Heart right ventricle (tissue), 16 donors: ENCODE measurements at regions of chr9 and their contacts with region 1.

Region 1: GRCh38 chr9:21210311-21210710 is 3.4 kb upstream of the IFNA10 start:
- DNase-seq: no peak
- ATAC-seq: no peak
- H3K4me3 ChIP-seq: no peak overlapping the region
- H3K27ac ChIP-seq: no peak overlapping the region
- H3K4me1 ChIP-seq: no peaks in the 10 kb centered on the region
- H3K27me3 ChIP-seq: peaks cover 0 to 3% (median 0%) of the 10 kb centered on the region in 7 donors
- CTCF ChIP-seq: no peak

Region 2: GRCh38 chr9:21154018-21154608 is 56.2 kb before region 1 on chr9:
- intact Hi-C with region 1: loop called in 1 of 10 experiments (anchors 10 kb)
- DNase-seq: no peak
- ATAC-seq: peak in 2 of 8 donors; percentile 46 to 50
- H3K4me3 ChIP-seq: no peak overlapping the region
- H3K27ac ChIP-seq: peak overlapping the region in 1 of 10 donors; percentile 32
- H3K4me1 ChIP-seq: peaks cover 0 to 16% (median 0%) of the 10 kb centered on the region in 9 donors
- H3K27me3 ChIP-seq: no peaks in the 10 kb centered on the region
- CTCF ChIP-seq: peak in 5 of 9 donors; percentile 21 to 37 (median 35)

Region 3: DNA sequence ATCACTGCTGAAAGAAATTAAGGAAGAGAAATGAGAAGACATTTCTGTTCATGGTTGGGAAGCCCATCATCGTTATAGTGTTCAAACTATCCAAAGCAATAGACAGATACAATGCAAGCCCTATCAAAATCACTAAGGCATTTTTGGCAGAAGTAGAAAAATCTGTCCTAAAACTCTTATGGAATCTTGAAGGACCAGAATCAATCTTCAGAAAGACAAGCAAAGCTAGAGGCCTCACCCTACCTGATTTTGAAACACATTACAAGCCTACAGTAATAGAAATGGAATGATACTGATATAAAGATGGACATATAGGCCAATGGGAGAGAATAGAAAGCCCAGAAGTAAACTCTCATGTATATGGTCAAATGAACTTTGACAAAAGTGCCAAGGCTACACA is 39.0 kb before region 1 on chr9:
- intact Hi-C with region 1: no loop called
- DNase-seq: no peak
- ATAC-seq: no peak
- H3K4me3 ChIP-seq: no peak overlapping the region
- H3K27ac ChIP-seq: no peak overlapping the region
- H3K4me1 ChIP-seq: peaks cover 0 to 3% (median 0%) of the 10 kb centered on the region in 9 donors
- H3K27me3 ChIP-seq: no peaks in the 10 kb centered on the region
- CTCF ChIP-seq: no peak